Uterus (tissue), 4 donors: ENCODE measurements at regions of chr9 and their contacts with region 1.

Region 1: GRCh38 chr9:110638381-110638954 is 30.1 kb upstream of the MUSK start:
- DNase-seq: no peak
- H3K4me3 ChIP-seq: no peak overlapping the region
- H3K27ac ChIP-seq: no peak overlapping the region
- H3K4me1 ChIP-seq: no peaks in the 10 kb centered on the region
- H3K27me3 ChIP-seq: no peaks in the 10 kb centered on the region
- CTCF ChIP-seq: peak; percentile 15 to 36 (median 34)
- POLR2A ChIP-seq: no peak

Region 2: DNA sequence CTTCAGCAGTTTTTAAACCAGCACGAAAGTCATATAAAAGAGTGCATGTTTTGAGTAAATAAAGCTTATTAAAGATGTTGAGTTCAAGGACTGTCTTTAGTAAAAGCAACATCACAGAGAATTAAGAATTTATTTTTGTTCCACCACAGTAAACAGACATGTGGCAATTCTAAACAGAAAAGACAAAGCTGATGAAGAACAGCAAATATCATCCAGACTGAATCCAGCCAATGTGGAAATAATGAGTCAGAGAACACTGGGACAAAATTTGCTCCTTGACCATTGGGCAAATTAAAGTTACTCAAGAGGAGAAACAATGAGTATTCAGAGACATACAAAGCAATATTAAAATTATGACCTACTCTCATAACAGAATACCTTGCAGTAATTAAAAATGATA is 662.7 kb after region 1 on chr9:
- intact Hi-C with region 1: loop called (anchors 10 kb)
- DNase-seq: no peak
- H3K4me3 ChIP-seq: no peak overlapping the region
- H3K27ac ChIP-seq: no peak overlapping the region
- H3K4me1 ChIP-seq: no peaks in the 10 kb centered on the region
- H3K27me3 ChIP-seq: no peaks in the 10 kb centered on the region
- CTCF ChIP-seq: no peak
- POLR2A ChIP-seq: no peak